ENCODE measurements at regions of chr15 and their contacts with region 1.

Region 1: GRCh38 chr15:92949604-92950249 is 49.6 kb downstream of the CHD2 start:
- DNase-seq: peak in 3 of 9 donors; percentile 6 to 19 (median 14)
- ATAC-seq: no peak
- H3K4me3 ChIP-seq: no peak overlapping the region
- H3K4me3 Mint-ChIP-seq: peak overlapping the region in 1 of 10 donors; percentile 21
- H3K27ac ChIP-seq: no peak overlapping the region
- H3K27ac Mint-ChIP-seq: peak overlapping the region in 3 of 9 donors; percentile 56 to 77 (median 66)
- H3K4me1 ChIP-seq: no peaks in the 10 kb centered on the region
- H3K4me1 Mint-ChIP-seq: peaks cover 0 to 15% (median 8%) of the 10 kb centered on the region in 7 donors
- H3K27me3 ChIP-seq: no peaks in the 10 kb centered on the region
- H3K27me3 Mint-ChIP-seq: no peaks in the 10 kb centered on the region

Region 2: DNA sequence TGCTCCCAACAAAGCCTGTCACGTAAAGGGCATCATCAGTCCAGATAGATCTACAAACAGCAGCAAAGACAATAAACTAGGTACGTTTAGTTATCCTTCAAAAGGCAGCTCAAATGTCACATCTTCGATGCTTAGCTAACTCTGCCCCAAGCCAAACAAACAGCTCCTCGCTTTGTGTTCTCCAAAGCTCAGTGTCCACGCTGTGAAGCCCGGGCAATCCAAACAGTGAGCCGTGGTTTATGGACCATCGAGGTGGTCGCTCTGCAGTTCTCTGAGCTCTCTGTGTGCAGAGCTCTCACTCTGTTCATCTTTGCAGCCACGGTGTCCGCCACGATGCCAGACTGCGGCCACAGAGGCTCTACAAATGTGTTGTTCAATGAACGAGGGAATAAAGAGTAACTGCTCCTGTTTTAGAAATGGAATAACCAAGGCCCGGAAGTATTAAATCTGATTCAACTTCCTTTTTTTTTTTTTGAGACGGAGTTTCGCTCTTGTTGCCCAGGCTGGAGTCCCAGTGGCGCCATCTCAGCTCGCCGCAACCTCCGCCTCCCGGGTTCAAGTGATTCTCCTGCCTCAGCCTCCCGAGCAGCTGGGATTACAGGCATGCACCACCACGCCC is 177.0 kb before region 1 on chr15:
- CTCF ChIA-PET with region 1: no interaction called
- POLR2A ChIA-PET with region 1: no interaction called
- intact Hi-C with region 1: no loop called
- DNase-seq: no peak
- ATAC-seq: no peak
- H3K4me3 ChIP-seq: no peak overlapping the region
- H3K4me3 Mint-ChIP-seq: no peak overlapping the region
- H3K27ac ChIP-seq: no peak overlapping the region
- H3K27ac Mint-ChIP-seq: no peak overlapping the region
- H3K4me1 ChIP-seq: no peaks in the 10 kb centered on the region
- H3K4me1 Mint-ChIP-seq: no peaks in the 10 kb centered on the region
- H3K27me3 ChIP-seq: no peaks in the 10 kb centered on the region
- H3K27me3 Mint-ChIP-seq: no peaks in the 10 kb centered on the region

Region 3: GRCh38 chr15:92930776-92931175 is 19.0 kb before region 1 on chr15:
- CTCF ChIA-PET with region 1: interaction called, 3 read pairs
- POLR2A ChIA-PET with region 1: interaction called, 3 read pairs
- intact Hi-C with region 1: loop called in 1 of 2 experiments (anchors 2 kb)
- DNase-seq: no peak
- ATAC-seq: no peak
- H3K4me3 ChIP-seq: no peak overlapping the region
- H3K4me3 Mint-ChIP-seq: no peak overlapping the region
- H3K27ac ChIP-seq: no peak overlapping the region
- H3K27ac Mint-ChIP-seq: peak overlapping the region in 8 of 9 donors; percentile 32 to 71 (median 52)
- H3K4me1 ChIP-seq: peaks cover 10 to 15% of the 10 kb centered on the region in 2 donors
- H3K4me1 Mint-ChIP-seq: peaks cover 19 to 77% (median 67%) of the 10 kb centered on the region in 7 donors
- H3K27me3 ChIP-seq: no peaks in the 10 kb centered on the region
- H3K27me3 Mint-ChIP-seq: no peaks in the 10 kb centered on the region

Measured in naive thymus-derived CD4-positive, alpha-beta T cell (primary cell).